ENCODE measurements at regions of chr17 and their contacts with region 1.

Region 1: DNA sequence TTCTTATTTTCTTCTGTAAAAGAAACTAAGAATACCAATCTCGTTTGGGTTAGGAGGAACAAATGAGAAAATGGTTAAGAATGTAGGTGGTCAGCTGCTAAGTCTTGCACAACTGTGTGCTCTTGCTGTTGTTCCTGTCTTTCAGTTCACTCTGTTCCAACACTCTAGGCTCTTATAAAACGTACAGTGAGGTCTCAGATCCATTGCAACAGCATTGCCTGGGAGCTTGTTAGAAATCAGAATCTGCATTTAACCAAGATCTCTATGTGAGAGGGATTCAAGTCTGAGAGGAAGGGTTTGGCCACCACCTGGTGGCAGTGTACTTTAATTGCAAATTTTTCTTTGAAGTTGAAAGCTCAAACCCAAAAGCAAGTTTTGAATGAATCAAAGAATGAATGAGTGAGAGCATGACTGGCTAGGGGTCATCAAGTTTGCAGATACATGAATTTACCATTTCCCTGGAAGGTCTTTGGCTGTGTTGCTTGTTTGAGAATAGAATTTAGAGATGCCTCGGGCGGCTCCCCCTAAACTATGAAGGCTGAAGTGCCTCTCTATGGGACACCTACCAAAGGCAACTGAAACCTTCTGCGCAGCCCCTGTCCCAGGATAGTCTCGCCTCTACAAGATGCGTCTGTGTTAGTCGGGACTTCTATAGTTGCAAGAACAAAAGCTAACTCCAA is 2.5 kb downstream of the ALOX15B start:
- DNase-seq: no peak
- ATAC-seq: peak; percentile 79

Region 2: DNA sequence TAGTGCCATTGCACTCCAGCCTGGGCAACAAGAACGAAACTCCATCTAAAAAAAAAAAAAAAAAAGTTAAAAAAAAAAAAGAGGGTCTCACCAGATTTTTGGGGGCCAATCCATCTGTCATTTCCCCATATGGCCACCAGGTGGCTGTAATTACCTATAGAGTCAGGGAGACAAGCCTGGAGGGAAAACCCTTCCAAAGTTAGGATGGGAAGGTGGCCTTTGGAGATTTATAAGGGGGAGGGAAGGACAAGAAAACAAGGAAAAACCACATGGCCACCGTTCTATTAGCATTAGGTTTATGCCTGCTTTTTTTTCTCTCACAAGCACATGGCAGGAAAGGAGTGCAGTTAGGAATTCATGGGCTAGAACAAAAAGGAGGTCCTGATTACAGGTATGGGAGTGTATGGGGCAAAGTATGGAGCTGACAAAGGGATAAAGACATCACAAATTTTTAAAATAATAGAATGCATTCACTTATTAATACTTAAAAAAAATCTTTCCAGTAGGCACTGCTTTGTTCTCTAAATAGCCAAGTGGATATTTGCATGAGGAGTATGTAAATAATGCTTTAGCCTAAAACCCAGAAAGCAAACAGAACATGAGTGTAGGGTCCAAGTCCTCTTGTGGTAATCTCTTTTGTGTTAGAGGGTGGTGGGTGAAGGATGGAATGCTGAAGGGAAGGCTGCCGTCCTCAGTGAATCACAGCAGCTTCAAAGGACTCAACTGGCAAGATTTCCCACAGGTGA is 178.5 kb before region 1 on chr17:
- intact Hi-C with region 1: loop called (anchors 5 kb)
- DNase-seq: no peak
- ATAC-seq: no peak

Region 3: GRCh38 chr17:7915611-7916382 is 125.6 kb before region 1 on chr17 and contains the start of gene RNF227:
- intact Hi-C with region 1: loop called (anchors 1 kb)
- DNase-seq: peak; percentile 96
- ATAC-seq: peak; percentile 91
- total RNA-seq, gene RNF227: 0.70 TPM

Region 4: GRCh38 chr17:8015957-8016631 is 25.3 kb before region 1 on chr17:
- intact Hi-C with region 1: loop called (anchors 2 kb)
- DNase-seq: no peak
- ATAC-seq: peak; percentile 42

Measured in Right ventricle myocardium inferior (tissue), 1 donor.